Activated CD8-positive, alpha-beta T cell treated with anti-CD3 and anti-CD28 coated beads, Interleukin-2, amount 10 ng/mL, durations not matched to agents 7 days and 5 days (primary cell): ENCODE measurements at regions of chr17 and their contacts with region 1.

Region 1: GRCh38 chr17:82863941-82864774 is 24.3 kb upstream of the ZNF750 start:
- DNase-seq: peak; percentile 96
- ATAC-seq: peak; percentile 94
- H3K4me3 Mint-ChIP-seq: peak overlapping the region; percentile 78
- H3K27ac Mint-ChIP-seq: peak overlapping the region; percentile 98
- H3K4me1 Mint-ChIP-seq: peaks cover 74% of the 10 kb centered on the region
- H3K27me3 Mint-ChIP-seq: no peaks in the 10 kb centered on the region

Region 2: DNA sequence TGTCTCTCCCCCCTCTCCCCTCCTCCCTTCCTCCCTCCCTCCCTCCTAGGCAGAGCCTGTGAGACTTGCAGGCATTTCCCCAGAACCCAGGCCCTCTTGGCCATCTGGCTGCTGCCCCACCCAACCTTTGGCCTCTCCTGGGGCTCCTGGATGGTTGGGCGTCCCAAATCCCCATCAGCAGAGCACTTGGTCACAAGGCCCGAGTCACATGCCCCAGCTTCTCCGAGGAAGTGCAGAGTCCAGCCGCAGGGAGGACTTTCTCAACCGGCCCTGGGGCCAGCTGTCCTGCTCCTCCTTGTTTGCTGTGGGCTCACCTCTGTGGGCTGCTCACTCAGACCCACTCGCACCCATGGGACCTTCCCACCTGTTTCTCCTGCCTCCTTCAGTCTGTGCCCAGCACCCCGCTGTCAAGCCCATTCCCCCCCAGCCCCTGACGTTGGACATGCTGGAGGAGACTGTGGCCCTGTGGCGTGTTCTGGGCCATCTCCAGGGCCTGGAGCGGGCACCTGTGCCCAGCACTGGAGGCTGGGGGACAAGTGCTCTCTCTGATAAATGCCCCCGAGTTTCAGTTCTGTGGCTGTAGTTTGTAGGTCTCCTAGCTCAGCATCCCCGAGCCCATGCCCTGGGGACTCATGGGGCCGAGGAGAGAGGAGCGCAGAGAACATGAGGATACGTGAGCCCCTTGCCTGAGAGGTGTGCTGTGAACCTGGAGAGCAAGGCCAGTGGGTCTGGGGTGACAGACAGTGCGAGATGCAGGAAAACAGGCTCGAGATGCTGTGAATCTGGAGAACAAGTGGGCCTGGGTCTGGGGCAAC is 17.9 kb after region 1 on chr17:
- CTCF ChIA-PET with region 1: interaction called, 21 read pairs
- POLR2A ChIA-PET with region 1: interaction called, 41 read pairs
- DNase-seq: no peak
- ATAC-seq: no peak
- H3K4me3 Mint-ChIP-seq: peak overlapping the region; percentile 74
- H3K27ac Mint-ChIP-seq: peak overlapping the region; percentile 95
- H3K4me1 Mint-ChIP-seq: peaks cover 93% of the 10 kb centered on the region
- H3K27me3 Mint-ChIP-seq: no peaks in the 10 kb centered on the region

Region 3: GRCh38 chr17:83012868-83013778 is 149.0 kb after region 1 on chr17:
- CTCF ChIA-PET with region 1: no interaction called
- POLR2A ChIA-PET with region 1: no interaction called
- DNase-seq: no peak
- ATAC-seq: no peak
- H3K4me3 Mint-ChIP-seq: no peak overlapping the region
- H3K27ac Mint-ChIP-seq: no peak overlapping the region
- H3K4me1 Mint-ChIP-seq: no peaks in the 10 kb centered on the region
- H3K27me3 Mint-ChIP-seq: no peaks in the 10 kb centered on the region